Heart right ventricle (tissue), 16 donors: ENCODE measurements at regions of chr9 and their contacts with region 1.

Region 1: DNA sequence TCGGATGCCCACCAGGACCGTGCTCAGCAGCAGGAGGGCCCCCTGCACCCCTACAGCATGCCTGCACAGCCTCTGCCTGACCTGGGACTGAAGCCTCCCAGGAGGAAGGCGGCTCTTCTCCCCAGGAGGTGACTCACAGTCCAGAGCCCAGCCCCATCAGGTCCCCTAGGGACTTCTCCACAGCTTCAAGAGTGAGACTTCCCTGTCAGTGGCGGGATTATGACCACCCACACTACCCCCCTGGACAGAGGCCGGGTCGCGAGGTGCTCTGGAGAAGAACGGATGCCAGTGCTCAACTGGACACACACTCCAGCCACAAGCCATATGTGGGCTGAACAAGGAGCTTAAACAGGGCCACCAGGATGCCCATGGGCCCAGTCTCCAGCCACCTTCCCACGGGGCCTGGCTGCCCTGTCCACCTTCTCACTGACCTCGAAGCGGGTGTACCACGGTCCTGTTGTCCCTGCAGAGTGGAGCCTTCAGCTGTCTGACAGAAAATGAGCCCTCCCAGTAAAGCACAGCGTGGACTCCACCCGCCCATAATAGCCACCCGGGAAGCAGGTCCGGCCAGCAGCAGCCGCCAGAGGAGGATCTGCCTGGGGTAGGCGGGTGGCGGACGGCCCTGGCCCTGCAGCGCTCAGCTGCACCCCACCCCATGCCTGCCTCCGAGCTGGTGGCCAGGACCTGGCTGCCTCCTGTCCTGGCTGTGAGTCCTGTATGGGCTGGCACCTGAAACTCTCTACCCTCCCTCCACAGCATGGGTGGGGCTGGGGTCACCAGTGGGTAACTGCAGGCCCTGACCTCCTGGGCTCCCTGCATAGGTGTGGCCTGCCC is 54.7 kb downstream of the SEMA4D start:
- DNase-seq: no peak
- ATAC-seq: no peak
- H3K4me3 ChIP-seq: no peak overlapping the region
- H3K27ac ChIP-seq: peak overlapping the region in 1 of 10 donors; percentile 20
- H3K4me1 ChIP-seq: peaks cover 0 to 71% (median 19%) of the 10 kb centered on the region in 9 donors
- H3K27me3 ChIP-seq: no peaks in the 10 kb centered on the region
- CTCF ChIP-seq: no peak

Region 2: GRCh38 chr9:89466451-89467277 is 23.5 kb after region 1 on chr9:
- intact Hi-C with region 1: no loop called
- DNase-seq: no peak
- ATAC-seq: no peak
- H3K4me3 ChIP-seq: no peak overlapping the region
- H3K27ac ChIP-seq: peak overlapping the region in 1 of 10 donors; percentile 88
- H3K4me1 ChIP-seq: peaks cover 0 to 88% (median 0%) of the 10 kb centered on the region in 9 donors
- H3K27me3 ChIP-seq: no peaks in the 10 kb centered on the region
- CTCF ChIP-seq: no peak

Region 3: DNA sequence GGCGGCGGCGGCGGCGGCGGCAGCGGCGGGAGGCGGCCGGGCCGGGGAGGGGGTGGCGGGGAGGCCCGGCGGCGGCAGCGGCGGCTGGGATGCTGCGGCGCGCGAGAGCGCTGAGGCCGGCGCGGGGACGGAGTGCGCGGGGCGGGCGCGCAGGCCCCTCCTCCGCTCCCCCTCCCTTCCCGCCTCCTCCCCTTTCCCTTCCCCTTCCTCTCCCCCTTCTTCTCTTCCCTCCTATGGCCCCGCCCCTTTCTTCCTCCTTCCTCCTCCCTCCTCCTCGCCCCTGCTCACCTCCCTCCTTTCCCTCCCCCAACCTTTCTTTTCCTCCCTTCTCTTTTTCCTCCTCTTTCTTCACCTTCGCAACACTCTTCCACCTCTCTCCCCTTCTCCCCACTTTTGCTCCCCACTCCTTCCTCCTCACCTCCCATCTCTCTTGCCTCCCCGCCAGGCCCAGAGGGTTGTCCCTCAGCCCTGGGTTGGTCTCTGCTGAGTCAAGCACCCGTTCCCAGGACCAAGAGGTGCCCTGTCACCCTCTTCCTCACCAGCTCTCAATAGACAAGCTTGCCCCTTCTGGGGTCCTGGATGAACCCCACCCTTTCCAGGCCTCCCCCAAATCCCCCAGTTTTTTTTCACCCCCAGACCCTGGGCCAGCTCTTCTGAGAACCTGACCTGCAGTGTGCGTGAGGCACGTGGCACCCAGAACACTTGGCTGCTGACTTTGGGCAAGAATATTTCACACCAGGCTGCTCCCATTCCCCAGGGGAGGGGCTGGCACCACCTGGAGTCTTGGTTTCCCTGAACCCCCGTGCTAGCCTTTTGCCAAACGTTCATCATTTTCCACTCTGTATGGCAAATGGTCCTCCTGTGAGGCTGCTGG is 55.0 kb after region 1 on chr9 and contains the start of gene SEMA4D:
- intact Hi-C with region 1: loop called in 1 of 10 experiments (anchors 10 kb)
- DNase-seq: peak; percentile 64 to 82
- ATAC-seq: peak in 7 of 8 donors; percentile 67 to 81 (median 77)
- H3K4me3 ChIP-seq: peak within 1 kb of the TSS; percentile 53 to 77 (median 72)
- H3K27ac ChIP-seq: peak within 1 kb of the TSS in 7 of 10 donors; percentile 28 to 90 (median 45)
- H3K4me1 ChIP-seq: peaks cover 0 to 71% (median 11%) of the 10 kb centered on the region in 9 donors
- H3K27me3 ChIP-seq: no peaks in the 10 kb centered on the region
- CTCF ChIP-seq: no peak
- total RNA-seq, gene SEMA4D: 16.2 to 51.0 (median 21.3) TPM